ENCODE measurements at regions of chr5 and their contacts with region 1.

Region 1: GRCh38 chr5:111853748-111854147 is 96.8 kb upstream of the NREP start:
- DNase-seq: no peak
- ATAC-seq: peak; percentile 35

Region 2: DNA sequence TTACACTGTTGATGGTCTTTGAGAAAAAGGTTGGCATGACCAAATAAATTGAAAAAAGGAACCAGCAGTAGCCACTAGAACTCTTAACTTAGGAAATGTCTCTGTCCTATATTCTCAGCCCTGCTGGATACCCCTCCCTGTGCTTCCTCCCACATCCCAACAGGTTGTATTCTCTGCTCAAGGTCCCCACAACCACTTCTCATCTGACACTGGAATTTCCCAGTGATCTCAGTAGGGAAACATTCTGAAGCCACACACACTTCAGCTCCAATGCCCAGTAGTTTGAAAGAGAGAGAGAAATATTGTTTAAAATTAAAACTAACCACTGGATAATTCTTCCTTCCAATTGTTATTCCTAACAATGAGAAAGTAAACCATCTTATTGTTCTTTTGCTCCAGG is 66.7 kb before region 1 on chr5:
- intact Hi-C with region 1: loop called (anchors 5 kb)
- DNase-seq: no peak
- ATAC-seq: no peak